Psoas muscle (tissue), 8 donors: ENCODE measurements at regions of chr2 and their contacts with region 1.

Region 1: DNA sequence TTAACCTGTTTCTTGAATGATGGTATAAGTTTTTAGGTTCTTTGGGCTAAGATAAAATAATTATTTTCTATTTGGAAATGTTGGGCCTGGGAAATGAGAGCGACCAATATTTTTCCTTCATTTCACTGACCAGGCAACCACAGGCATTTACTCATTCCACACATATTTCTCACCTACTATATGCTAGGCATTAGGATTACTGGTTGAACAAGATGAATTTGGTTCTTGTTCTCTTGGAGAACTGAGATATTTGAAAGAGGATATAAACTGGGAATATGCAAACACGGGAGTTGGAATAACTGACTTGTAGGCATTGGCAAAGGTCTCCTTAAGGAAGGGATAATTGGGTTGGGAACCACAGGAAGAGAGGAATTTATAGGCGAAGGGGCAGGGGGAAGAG is 3.9 kb upstream of the MYL1 start:
- DNase-seq: no peak
- ATAC-seq: no peak
- H3K4me3 ChIP-seq: no peak overlapping the region
- H3K27ac ChIP-seq: peak overlapping the region; percentile 85
- H3K4me1 ChIP-seq: peaks cover 49% of the 10 kb centered on the region
- H3K27me3 ChIP-seq: no peaks in the 10 kb centered on the region
- CTCF ChIP-seq: no peak

Region 2: DNA sequence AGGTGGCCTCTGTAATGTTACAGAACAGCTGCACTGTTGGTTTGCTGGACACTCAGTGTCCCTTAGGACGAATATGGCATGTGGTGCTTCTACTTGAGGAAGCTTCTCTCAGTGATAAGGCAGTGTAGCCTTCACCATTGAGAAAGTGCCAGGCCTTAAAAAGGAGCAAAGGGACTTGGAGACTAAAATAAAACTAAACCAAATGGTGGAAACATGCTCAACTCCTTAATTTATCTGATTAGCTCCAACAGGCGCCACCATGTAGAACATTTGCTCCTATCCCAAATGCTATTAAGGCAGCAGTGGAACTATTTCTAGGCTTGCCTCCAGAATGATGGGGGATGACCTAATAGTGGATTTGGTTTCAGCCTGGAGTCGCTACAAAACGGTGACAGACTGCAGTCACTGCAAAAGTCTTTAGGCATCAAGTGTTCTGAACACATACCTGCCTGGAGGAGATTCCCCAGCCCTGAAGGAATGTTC is 73.6 kb after region 1 on chr2:
- intact Hi-C with region 1: loop called in 1 of 2 experiments (anchors 1 kb)
- DNase-seq: no peak
- ATAC-seq: peak; percentile 94 to 98 (median 95)
- H3K4me3 ChIP-seq: peak overlapping the region; percentile 21
- H3K27ac ChIP-seq: peak overlapping the region; percentile 86
- H3K4me1 ChIP-seq: peaks cover 27% of the 10 kb centered on the region
- H3K27me3 ChIP-seq: no peaks in the 10 kb centered on the region
- CTCF ChIP-seq: no peak